ENCODE measurements at regions of chr21 and their contacts with region 1.

Region 1: DNA sequence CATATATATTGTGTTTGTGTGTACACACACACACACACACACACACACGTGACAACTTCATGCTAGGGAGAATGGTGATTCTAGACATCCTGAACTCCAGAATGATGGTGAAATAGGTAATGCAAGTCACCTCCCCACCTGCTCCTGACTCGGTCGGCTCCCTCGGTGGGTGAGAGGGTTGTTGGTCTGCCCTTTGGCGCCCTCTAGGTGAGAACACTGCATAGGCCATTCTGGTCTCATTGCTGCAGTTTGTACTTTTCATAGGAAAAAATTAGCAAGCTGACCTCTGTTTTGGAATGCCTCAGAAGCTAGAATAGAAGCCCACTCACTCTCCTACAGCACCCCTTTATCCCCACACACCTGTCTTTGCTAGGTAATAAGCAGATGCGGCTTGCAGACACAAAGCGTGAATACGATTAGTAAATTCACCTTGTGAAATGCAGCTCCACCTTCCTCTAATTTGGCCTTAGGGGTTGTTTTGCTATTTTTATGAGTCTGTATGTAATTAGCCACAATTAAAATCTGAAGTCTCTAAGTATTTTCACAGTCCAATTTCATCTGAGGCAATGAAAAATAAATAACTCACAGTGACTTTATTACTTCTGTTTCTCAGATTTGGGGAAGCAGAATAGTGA is 130.0 kb upstream of the KCNJ15 start:
- DNase-seq: peak; percentile 75 to 86 (median 79)
- ATAC-seq: peak; percentile 97
- H3K4me3 ChIP-seq: no peak overlapping the region
- H3K27ac ChIP-seq: no peak overlapping the region
- H3K4me1 ChIP-seq: peaks cover 0 to 10% of the 10 kb centered on the region in 2 experiments; a peak in 4 of 5 replicates
- H3K27me3 ChIP-seq: no peaks in the 10 kb centered on the region
- CTCF ChIP-seq: peak; percentile 90 to 94 (median 93)
- EP300 ChIP-seq: no peak
- POLR2A ChIP-seq: no peak
- RAD21 ChIP-seq: peak; percentile 80 to 93

Region 2: DNA sequence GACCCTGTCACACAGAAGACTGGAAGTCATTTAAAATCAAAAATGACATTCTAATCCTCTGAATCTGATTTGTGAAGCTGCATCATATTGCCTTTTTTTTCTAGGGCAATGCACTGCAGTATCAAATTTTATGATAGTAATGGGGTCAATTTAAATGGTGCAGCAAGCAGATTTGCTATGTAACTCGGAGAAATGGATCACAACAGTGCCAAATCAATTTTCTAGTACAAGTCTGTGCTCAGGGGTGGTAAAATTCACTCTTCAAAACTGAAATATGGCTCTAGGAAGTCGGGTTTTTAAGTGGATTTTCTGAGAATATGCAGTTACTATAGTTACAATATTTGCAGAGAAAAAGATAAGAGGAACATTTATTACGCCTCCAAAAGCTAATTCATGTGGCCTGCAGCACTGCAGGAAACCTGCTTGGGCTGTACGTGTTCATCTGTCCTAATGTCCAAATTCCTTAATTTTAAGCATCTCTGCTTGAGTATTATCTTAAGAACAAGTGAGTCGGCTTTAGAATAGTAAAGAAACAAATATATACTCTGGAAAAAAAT is 1191.8 kb before region 1 on chr21:
- CTCF ChIA-PET with region 1: no interaction called
- POLR2A ChIA-PET with region 1: no interaction called
- in situ Hi-C with region 1: no loop called
- intact Hi-C with region 1: no loop called
- DNase-seq: no peak
- ATAC-seq: no peak
- H3K4me3 ChIP-seq: no peak overlapping the region
- H3K27ac ChIP-seq: no peak overlapping the region
- H3K4me1 ChIP-seq: no peaks in the 10 kb centered on the region; a peak in 1 of 5 replicates
- H3K27me3 ChIP-seq: no peaks in the 10 kb centered on the region
- CTCF ChIP-seq: no peak
- EP300 ChIP-seq: no peak
- POLR2A ChIP-seq: no peak
- RAD21 ChIP-seq: no peak

Region 3: GRCh38 chr21:37711836-37712568 is 414.8 kb before region 1 on chr21:
- CTCF ChIA-PET with region 1: interaction called, 4 read pairs
- POLR2A ChIA-PET with region 1: no interaction called
- in situ Hi-C with region 1: no loop called
- intact Hi-C with region 1: loop called (anchors 5 kb)
- DNase-seq: peak; percentile 67 to 77 (median 69)
- ATAC-seq: peak; percentile 99
- H3K4me3 ChIP-seq: no peak overlapping the region
- H3K27ac ChIP-seq: no peak overlapping the region
- H3K4me1 ChIP-seq: peaks cover 0 to 5% of the 10 kb centered on the region in 2 experiments; a peak in 2 of 5 replicates
- H3K27me3 ChIP-seq: peaks cover 2 to 22% of the 10 kb centered on the region in 2 experiments; a peak in 3 of 5 replicates
- CTCF ChIP-seq: peak; percentile 86 to 96 (median 89)
- EP300 ChIP-seq: no peak
- POLR2A ChIP-seq: no peak
- RAD21 ChIP-seq: peak; percentile 68 to 83

Region 4: DNA sequence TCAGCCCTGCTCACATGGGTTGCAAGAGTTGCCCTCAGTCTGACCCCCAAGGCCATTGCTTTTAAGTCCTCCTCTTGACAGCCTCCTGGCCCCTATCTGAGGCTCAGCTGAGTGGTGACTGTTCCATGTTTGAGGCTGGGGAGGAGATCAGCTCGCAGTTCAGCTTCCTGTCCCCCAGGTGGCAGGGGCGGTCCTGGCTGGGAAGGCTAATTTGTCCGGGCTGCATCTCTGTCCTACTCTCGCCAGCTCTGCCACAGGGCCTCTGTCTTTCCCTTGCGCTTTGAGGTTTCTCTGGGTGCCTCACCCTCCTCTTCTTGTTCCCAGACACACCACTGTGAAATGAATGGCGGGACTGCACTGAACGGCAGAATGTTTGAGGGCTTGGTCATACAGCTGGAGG is 367.8 kb before region 1 on chr21:
- CTCF ChIA-PET with region 1: interaction called, 4 read pairs
- POLR2A ChIA-PET with region 1: interaction called, 3 read pairs
- in situ Hi-C with region 1: no loop called
- intact Hi-C with region 1: loop called (anchors 5 kb)
- DNase-seq: peak; percentile 46 to 65 (median 52)
- ATAC-seq: peak; percentile 90
- H3K4me3 ChIP-seq: no peak overlapping the region
- H3K27ac ChIP-seq: no peak overlapping the region
- H3K4me1 ChIP-seq: no peaks in the 10 kb centered on the region
- H3K27me3 ChIP-seq: peaks cover 5 to 54% of the 10 kb centered on the region in 2 experiments; a peak in 4 of 5 replicates
- CTCF ChIP-seq: peak; percentile 64 to 71 (median 69)
- EP300 ChIP-seq: no peak
- POLR2A ChIP-seq: no peak
- RAD21 ChIP-seq: peak; percentile 53 to 73

Region 5: GRCh38 chr21:37916310-37917051 is 210.3 kb before region 1 on chr21 and contains the start of gene KCNJ6:
- CTCF ChIA-PET with region 1: no interaction called
- POLR2A ChIA-PET with region 1: no interaction called
- in situ Hi-C with region 1: no loop called
- intact Hi-C with region 1: loop called (anchors 1 kb)
- DNase-seq: peak; percentile 59 to 78 (median 62)
- ATAC-seq: peak; percentile 99
- H3K4me3 ChIP-seq: no peak within 1 kb of the TSS; the same call in 1 of the 2 replicates
- H3K27ac ChIP-seq: no peak within 1 kb of the TSS
- H3K4me1 ChIP-seq: peaks cover 0 to 18% of the 10 kb centered on the region in 2 experiments; a peak in 2 of 5 replicates
- H3K27me3 ChIP-seq: peaks cover 13 to 41% of the 10 kb centered on the region in 2 experiments; a peak in 4 of 5 replicates
- CTCF ChIP-seq: peak; percentile 67 to 94 (median 74)
- EP300 ChIP-seq: no peak
- POLR2A ChIP-seq: no peak
- RAD21 ChIP-seq: peak in 1 of 2 experiments; percentile 50; a peak in 2 of 4 replicates
- polyA plus RNA-seq, gene KCNJ6: 0.13 TPM

Region 6: GRCh38 chr21:38027901-38028498 is 98.8 kb before region 1 on chr21:
- CTCF ChIA-PET with region 1: no interaction called
- POLR2A ChIA-PET with region 1: no interaction called
- in situ Hi-C with region 1: loop called (anchors 5 kb)
- intact Hi-C with region 1: no loop called
- DNase-seq: peak in 2 of 4 experiments; percentile 26 to 40
- ATAC-seq: peak; percentile 50; the same call in 1 of the 3 replicates
- H3K4me3 ChIP-seq: no peak overlapping the region
- H3K27ac ChIP-seq: no peak overlapping the region
- H3K4me1 ChIP-seq: peaks cover 0 to 17% of the 10 kb centered on the region in 2 experiments; a peak in 3 of 5 replicates
- H3K27me3 ChIP-seq: no peaks in the 10 kb centered on the region
- CTCF ChIP-seq: no peak
- EP300 ChIP-seq: no peak
- POLR2A ChIP-seq: no peak
- RAD21 ChIP-seq: no peak

Region 7: GRCh38 chr21:38037416-38037815 is 89.4 kb before region 1 on chr21:
- CTCF ChIA-PET with region 1: interaction called, 3 read pairs
- POLR2A ChIA-PET with region 1: interaction called, 5 read pairs
- in situ Hi-C with region 1: loop called (anchors 5 kb)
- intact Hi-C with region 1: loop called (anchors 1 kb)
- DNase-seq: no peak
- ATAC-seq: no peak
- H3K4me3 ChIP-seq: no peak overlapping the region
- H3K27ac ChIP-seq: no peak overlapping the region
- H3K4me1 ChIP-seq: peaks cover 0 to 5% of the 10 kb centered on the region in 2 experiments; a peak in 1 of 5 replicates
- H3K27me3 ChIP-seq: no peaks in the 10 kb centered on the region
- CTCF ChIP-seq: no peak
- EP300 ChIP-seq: no peak
- POLR2A ChIP-seq: no peak
- RAD21 ChIP-seq: no peak

Region 8: GRCh38 chr21:38277501-38278131 is 150.8 kb after region 1 on chr21:
- CTCF ChIA-PET with region 1: no interaction called
- POLR2A ChIA-PET with region 1: no interaction called
- in situ Hi-C with region 1: no loop called
- intact Hi-C with region 1: no loop called
- DNase-seq: peak in 2 of 4 experiments; percentile 18 to 51
- ATAC-seq: peak; percentile 66; the same call in 2 of the 3 replicates
- H3K4me3 ChIP-seq: no peak overlapping the region
- H3K27ac ChIP-seq: no peak overlapping the region
- H3K4me1 ChIP-seq: peaks cover 0 to 3% of the 10 kb centered on the region in 2 experiments; a peak in 1 of 5 replicates
- H3K27me3 ChIP-seq: peaks cover 2 to 8% of the 10 kb centered on the region in 2 experiments
- CTCF ChIP-seq: no peak
- EP300 ChIP-seq: peak; percentile 24; the same call in 1 of the 2 replicates
- POLR2A ChIP-seq: no peak
- RAD21 ChIP-seq: no peak